ENCODE measurements at regions of chr15 and their contacts with region 1.

Region 1: DNA sequence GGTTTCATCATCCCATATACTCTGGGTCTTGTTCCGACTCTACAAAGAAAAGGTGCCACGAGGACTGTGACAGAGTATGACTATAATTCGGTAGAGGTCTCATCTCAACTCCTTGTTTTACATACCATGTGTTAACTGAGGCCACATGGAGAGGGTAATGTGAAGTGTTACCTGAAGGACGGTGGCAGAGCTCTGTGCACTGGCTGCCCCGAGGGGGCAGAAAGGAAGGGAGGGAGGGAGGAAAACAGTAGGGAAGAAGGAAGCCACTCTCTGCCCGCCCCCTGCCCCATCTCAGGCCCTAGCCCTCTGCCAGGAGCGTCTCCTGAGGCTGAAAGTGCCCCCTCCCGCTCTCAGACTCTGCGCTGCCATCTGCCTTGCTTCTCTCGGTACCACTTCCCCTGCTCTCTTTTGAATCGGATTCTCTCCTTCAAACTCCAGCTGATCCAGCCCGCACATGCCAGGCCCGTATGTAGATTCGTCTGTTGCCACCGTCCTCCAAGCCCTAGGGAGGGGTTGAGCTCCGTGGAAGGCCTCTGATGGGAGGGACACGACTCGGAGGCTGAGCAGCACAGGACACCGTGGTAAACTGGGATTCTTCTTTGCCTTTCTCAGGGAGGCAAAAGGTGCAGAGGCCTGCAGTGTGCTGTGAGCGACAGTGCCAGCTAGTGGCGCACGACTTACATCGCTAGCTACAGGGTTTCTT is 70.5 kb upstream of the ATP10A start:
- DNase-seq: peak; percentile 44 to 80 (median 72)
- ATAC-seq: peak; percentile 88 to 98 (median 92)
- H3K4me3 ChIP-seq: peak overlapping the region in 8 of 12 donors; percentile 10 to 43 (median 28)
- H3K27ac ChIP-seq: no peak overlapping the region
- H3K4me1 ChIP-seq: peaks cover 0 to 7% (median 1%) of the 10 kb centered on the region in 12 donors
- H3K27me3 ChIP-seq: no peaks in the 10 kb centered on the region
- CTCF ChIP-seq: peak; percentile 44 to 75 (median 63)
- POLR2A ChIP-seq: no peak

Region 2: DNA sequence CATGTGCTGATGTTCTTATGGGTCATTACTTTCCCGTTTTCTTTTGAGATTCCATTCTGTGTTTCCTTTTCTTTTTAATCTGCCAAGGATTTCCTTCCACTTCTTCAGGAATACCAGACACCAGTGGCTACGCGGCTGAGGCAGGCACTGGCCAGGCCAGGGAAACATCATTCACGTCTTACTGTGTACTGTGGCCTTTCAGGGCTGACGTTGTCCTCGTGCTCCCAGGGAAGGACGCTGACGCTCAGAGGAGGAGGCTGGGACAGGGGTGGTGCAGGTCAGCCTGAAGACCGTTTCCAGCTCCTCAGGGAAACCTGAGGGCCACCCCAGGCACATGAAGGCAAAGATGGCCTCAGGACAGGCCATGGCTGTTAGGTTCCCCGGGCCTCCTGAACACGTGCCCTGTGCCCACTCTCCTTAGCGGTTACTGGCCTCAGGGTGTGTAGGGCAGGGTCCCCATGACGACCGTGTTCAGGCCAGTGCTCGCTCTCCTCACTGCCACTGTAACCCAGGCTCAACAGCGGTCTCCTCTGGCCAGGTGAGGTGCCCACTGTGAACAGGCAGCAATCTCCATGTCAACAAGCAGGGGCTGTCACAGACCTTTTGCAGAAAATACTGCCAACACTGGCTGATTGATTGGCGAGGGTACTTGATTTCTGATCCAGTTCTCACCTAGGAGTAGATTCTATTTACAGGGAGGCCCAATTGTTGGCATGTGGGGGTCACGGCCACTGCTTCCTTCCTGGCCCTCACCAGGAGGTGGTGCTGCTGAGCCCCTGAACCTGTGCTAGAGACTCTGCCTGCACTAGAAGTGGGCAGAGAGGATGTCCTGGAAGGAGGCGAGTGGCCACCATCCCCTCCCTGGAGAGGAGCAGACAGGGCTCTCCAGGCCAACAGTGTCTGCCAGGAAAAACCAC is 240.0 kb before region 1 on chr15:
- intact Hi-C with region 1: loop called in 8 of 10 experiments (anchors 2 to 10 kb)
- DNase-seq: peak in 2 of 5 donors; percentile 31 to 43
- ATAC-seq: peak in 3 of 4 donors; percentile 51 to 67 (median 58)
- H3K4me3 ChIP-seq: no peak overlapping the region
- H3K27ac ChIP-seq: no peak overlapping the region
- H3K4me1 ChIP-seq: peaks cover 0 to 22% (median 0%) of the 10 kb centered on the region in 12 donors
- H3K27me3 ChIP-seq: no peaks in the 10 kb centered on the region
- CTCF ChIP-seq: peak; percentile 35 to 66 (median 59)
- POLR2A ChIP-seq: no peak

Region 3: DNA sequence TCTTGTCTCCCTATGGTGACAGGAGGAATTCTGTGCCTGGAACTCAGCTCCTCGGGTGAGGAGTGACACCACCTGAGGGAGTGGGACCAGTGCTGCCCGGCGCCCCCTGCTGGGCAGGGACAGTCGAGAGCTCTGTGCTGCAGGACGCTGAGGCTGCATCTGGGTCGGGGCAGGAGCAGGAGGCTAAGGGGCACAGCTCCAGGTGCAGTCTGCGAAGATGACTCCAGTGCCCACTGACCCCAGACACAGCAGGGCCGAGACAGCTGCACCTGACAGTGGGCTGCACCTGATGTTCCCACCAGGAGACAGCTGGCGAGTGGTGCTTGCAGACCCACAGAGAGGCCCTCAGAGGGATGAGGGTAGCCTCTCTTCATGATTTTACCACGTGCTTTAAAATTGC is 223.4 kb before region 1 on chr15:
- intact Hi-C with region 1: loop called in 1 of 10 experiments (anchors 10 kb)
- DNase-seq: peak in 4 of 5 donors; percentile 30 to 79 (median 53)
- ATAC-seq: peak in 3 of 4 donors; percentile 63 to 78 (median 75)
- H3K4me3 ChIP-seq: no peak overlapping the region
- H3K27ac ChIP-seq: no peak overlapping the region
- H3K4me1 ChIP-seq: no peaks in the 10 kb centered on the region
- H3K27me3 ChIP-seq: no peaks in the 10 kb centered on the region
- CTCF ChIP-seq: peak; percentile 36 to 73 (median 60)
- POLR2A ChIP-seq: no peak

Region 4: GRCh38 chr15:25739687-25740121 is 193.9 kb before region 1 on chr15:
- intact Hi-C with region 1: loop called in 2 of 10 experiments (anchors 5 kb)
- DNase-seq: no peak
- ATAC-seq: peak in 1 of 4 donors; percentile 33
- H3K4me3 ChIP-seq: no peak overlapping the region
- H3K27ac ChIP-seq: no peak overlapping the region
- H3K4me1 ChIP-seq: peaks cover 0 to 38% (median 16%) of the 10 kb centered on the region in 12 donors
- H3K27me3 ChIP-seq: no peaks in the 10 kb centered on the region
- CTCF ChIP-seq: peak in 8 of 12 donors; percentile 16 to 40 (median 34)
- POLR2A ChIP-seq: no peak

Region 5: GRCh38 chr15:26340376-26340775 is 406.8 kb after region 1 on chr15:
- intact Hi-C with region 1: no loop called
- DNase-seq: no peak
- ATAC-seq: no peak
- H3K4me3 ChIP-seq: no peak overlapping the region
- H3K27ac ChIP-seq: no peak overlapping the region
- H3K4me1 ChIP-seq: no peaks in the 10 kb centered on the region
- H3K27me3 ChIP-seq: no peaks in the 10 kb centered on the region
- CTCF ChIP-seq: no peak
- POLR2A ChIP-seq: no peak

Region 6: GRCh38 chr15:26449291-26449690 is 515.7 kb after region 1 on chr15:
- intact Hi-C with region 1: no loop called
- DNase-seq: no peak
- ATAC-seq: no peak
- H3K4me3 ChIP-seq: no peak overlapping the region
- H3K27ac ChIP-seq: no peak overlapping the region
- H3K4me1 ChIP-seq: no peaks in the 10 kb centered on the region
- H3K27me3 ChIP-seq: no peaks in the 10 kb centered on the region
- CTCF ChIP-seq: no peak
- POLR2A ChIP-seq: no peak

Measured in heart left ventricle (tissue), 16 donors.